Common myeloid progenitor, CD34-positive (primary cell): ENCODE measurements at regions of chr7 and their contacts with region 1.

Region 1: GRCh38 chr7:149028346-149029109 is at the start of gene PDIA4:
- DNase-seq: peak; percentile 99 to 100 (median 100)
- H3K4me3 ChIP-seq: peak within 1 kb of the TSS; percentile 65 to 96 (median 87)
- H3K27ac ChIP-seq: peak within 1 kb of the TSS; percentile 75 to 91
- H3K4me1 ChIP-seq: peaks cover 11 to 22% (median 18%) of the 10 kb centered on the region in 4 experiments
- H3K27me3 ChIP-seq: peaks cover 0 to 1% (median 0%) of the 10 kb centered on the region in 5 experiments

Region 2: GRCh38 chr7:148967032-148967372 is 61.5 kb before region 1 on chr7:
- CTCF ChIA-PET with region 1: no interaction called
- POLR2A ChIA-PET with region 1: no interaction called
- DNase-seq: no peak
- H3K4me3 ChIP-seq: peak overlapping the region in 6 of 7 experiments; percentile 9 to 79 (median 64)
- H3K27ac ChIP-seq: no peak overlapping the region
- H3K4me1 ChIP-seq: peaks cover 2 to 18% (median 7%) of the 10 kb centered on the region in 4 experiments
- H3K27me3 ChIP-seq: no peaks in the 10 kb centered on the region

Region 3: DNA sequence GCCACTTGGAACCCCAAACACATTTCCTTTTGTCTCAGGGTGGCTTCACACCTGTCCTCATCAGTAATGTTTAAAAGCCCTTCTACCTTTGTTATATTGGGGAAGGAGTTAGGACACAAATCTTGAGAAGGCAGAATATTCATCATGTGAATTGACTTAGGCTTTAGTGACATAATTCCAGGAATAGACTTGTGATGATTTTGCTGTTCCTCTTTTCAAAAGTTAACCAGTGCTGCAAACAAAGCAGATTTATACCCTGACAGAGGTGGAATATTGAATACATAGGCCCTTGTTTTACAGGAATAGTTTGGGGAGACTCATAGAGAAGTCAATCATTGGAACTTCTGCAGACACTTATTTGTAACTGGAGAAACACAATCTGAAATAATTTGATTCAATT is 34.9 kb after region 1 on chr7:
- CTCF ChIA-PET with region 1: interaction called, 15 read pairs
- POLR2A ChIA-PET with region 1: interaction called, 5 read pairs
- DNase-seq: no peak
- H3K4me3 ChIP-seq: no peak overlapping the region
- H3K27ac ChIP-seq: no peak overlapping the region
- H3K4me1 ChIP-seq: peaks cover 0 to 19% (median 2%) of the 10 kb centered on the region in 4 experiments
- H3K27me3 ChIP-seq: no peaks in the 10 kb centered on the region